Breast epithelium (tissue), 4 donors: ENCODE measurements at regions of chr21 and their contacts with region 1.

Region 1: GRCh38 chr21:34822942-34823341 is 154.1 kb downstream of the CLIC6 start:
- DNase-seq: no peak
- H3K4me3 ChIP-seq: no peak overlapping the region
- H3K27ac ChIP-seq: peak overlapping the region in 1 of 2 donors; percentile 32
- H3K4me1 ChIP-seq: peaks cover 0 to 12% of the 10 kb centered on the region in 2 donors
- H3K27me3 ChIP-seq: no peaks in the 10 kb centered on the region
- CTCF ChIP-seq: no peak
- POLR2A ChIP-seq: no peak

Region 2: GRCh38 chr21:34545079-34545884 is 277.7 kb before region 1 on chr21:
- intact Hi-C with region 1: no loop called
- DNase-seq: peak in 1 of 2 donors; percentile 57
- H3K4me3 ChIP-seq: peak overlapping the region in 1 of 3 donors; percentile 4
- H3K27ac ChIP-seq: peak overlapping the region; percentile 84 to 86
- H3K4me1 ChIP-seq: peaks cover 0 to 16% of the 10 kb centered on the region in 2 donors
- H3K27me3 ChIP-seq: no peaks in the 10 kb centered on the region
- CTCF ChIP-seq: no peak
- POLR2A ChIP-seq: no peak

Region 3: GRCh38 chr21:35084869-35085268 is 261.9 kb after region 1 on chr21:
- intact Hi-C with region 1: no loop called
- DNase-seq: no peak
- H3K4me3 ChIP-seq: no peak overlapping the region
- H3K27ac ChIP-seq: no peak overlapping the region
- H3K4me1 ChIP-seq: no peaks in the 10 kb centered on the region
- H3K27me3 ChIP-seq: no peaks in the 10 kb centered on the region
- CTCF ChIP-seq: no peak
- POLR2A ChIP-seq: no peak

Region 4: DNA sequence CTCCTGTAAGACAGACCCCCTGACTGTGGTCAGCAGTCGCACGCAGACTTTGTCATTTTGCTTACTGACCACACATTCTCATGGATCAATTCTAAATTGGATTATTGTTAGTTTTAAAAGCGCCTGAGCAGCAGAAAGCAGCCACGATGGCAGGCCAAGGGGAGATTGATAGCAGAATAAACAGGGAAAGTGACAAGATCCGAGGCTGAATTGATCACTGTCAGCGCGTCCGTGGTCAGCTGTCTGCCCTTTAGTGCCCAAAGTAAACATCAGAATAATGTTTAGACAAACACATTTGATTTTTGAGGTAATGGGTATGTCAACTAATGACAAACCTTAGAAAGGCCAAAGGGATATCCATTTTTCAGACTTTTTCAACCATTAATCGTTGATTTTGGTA is 810.6 kb after region 1 on chr21:
- intact Hi-C with region 1: loop called (anchors 5 kb)
- DNase-seq: no peak
- H3K4me3 ChIP-seq: no peak overlapping the region
- H3K27ac ChIP-seq: no peak overlapping the region
- H3K4me1 ChIP-seq: no peaks in the 10 kb centered on the region
- H3K27me3 ChIP-seq: no peaks in the 10 kb centered on the region
- CTCF ChIP-seq: no peak
- POLR2A ChIP-seq: no peak

Region 5: GRCh38 chr21:36825683-36826082 is 2002.7 kb after region 1 on chr21:
- intact Hi-C with region 1: no loop called
- DNase-seq: no peak
- H3K4me3 ChIP-seq: no peak overlapping the region
- H3K27ac ChIP-seq: no peak overlapping the region
- H3K4me1 ChIP-seq: no peaks in the 10 kb centered on the region
- H3K27me3 ChIP-seq: no peaks in the 10 kb centered on the region
- CTCF ChIP-seq: no peak
- POLR2A ChIP-seq: no peak